ENCODE measurements at regions of chr3 and their contacts with region 1.

Region 1: GRCh38 chr3:193780810-193781472 is 187.9 kb downstream of the OPA1 start:
- DNase-seq: peak; percentile 84
- H3K4me3 Mint-ChIP-seq: no peak overlapping the region
- H3K27ac Mint-ChIP-seq: peak overlapping the region; percentile 97
- H3K4me1 Mint-ChIP-seq: peaks cover 55% of the 10 kb centered on the region
- H3K27me3 Mint-ChIP-seq: no peaks in the 10 kb centered on the region
- CTCF ChIP-seq: peak; percentile 96

Region 2: GRCh38 chr3:193665370-193665989 is 115.5 kb before region 1 on chr3:
- CTCF ChIA-PET with region 1: interaction called, 11 read pairs
- intact Hi-C with region 1: no loop called
- DNase-seq: no peak
- H3K4me3 Mint-ChIP-seq: no peak overlapping the region
- H3K27ac Mint-ChIP-seq: no peak overlapping the region
- H3K4me1 Mint-ChIP-seq: no peaks in the 10 kb centered on the region
- H3K27me3 Mint-ChIP-seq: no peaks in the 10 kb centered on the region
- CTCF ChIP-seq: peak; percentile 74

Region 3: DNA sequence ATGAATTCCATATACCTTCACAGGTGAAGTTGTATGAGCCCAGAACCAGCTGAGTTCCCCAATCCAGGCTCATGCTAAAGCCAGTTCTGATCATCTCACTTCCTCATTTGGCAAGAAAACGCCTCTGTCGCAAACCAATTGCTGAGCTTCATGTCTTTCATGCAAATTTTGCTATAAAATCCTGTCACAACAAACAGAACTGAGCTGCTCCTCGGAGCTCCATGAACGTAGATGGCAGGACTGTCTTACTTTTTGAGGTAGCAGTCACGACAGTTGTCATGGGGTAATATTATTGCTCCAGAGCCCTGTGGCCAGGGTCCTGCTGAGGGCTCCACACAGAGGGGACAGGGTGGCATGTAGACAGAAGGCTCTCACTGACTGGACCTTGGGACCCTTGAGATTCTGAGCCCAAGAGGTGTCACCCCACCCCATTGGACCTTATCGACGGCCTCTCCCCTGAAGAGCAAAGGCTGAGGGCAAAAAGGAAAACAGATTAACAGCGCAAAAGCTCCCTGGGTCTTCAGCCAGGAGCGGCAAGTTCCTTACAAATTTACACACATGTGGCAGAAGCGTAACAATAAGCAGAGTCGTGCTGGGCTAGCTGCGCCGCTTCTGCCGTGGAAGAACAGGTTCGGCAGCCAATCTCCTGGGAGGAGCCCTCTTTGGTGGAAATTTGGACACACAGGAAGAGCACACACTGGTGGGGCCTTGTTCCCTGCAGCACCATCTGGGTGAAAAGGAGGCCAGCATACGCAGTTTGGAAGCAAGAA is 61.3 kb after region 1 on chr3:
- CTCF ChIA-PET with region 1: interaction called, 28 read pairs
- intact Hi-C with region 1: loop called (anchors 2 kb)
- DNase-seq: no peak
- H3K4me3 Mint-ChIP-seq: peak overlapping the region; percentile 59
- H3K27ac Mint-ChIP-seq: peak overlapping the region; percentile 96
- H3K4me1 Mint-ChIP-seq: peaks cover 94% of the 10 kb centered on the region
- H3K27me3 Mint-ChIP-seq: no peaks in the 10 kb centered on the region
- CTCF ChIP-seq: no peak

Region 4: DNA sequence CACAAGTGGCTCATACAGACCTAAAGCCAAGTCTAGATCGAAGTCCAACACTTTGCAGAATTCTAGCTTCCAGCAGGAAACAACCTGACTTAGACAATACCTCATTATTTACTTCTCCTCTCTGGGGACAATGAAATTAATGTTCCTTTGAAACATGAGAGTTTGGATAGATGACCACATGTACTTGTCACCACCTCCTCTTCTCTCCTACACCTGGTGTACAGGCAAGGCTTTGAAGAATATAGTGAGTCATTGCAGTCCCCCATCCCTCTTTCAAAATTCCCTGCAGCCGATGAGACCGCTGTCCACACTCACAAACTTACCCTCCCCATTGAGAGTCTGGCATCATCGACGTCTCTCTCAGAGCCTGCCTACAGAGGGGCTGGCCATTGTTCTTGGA is 166.0 kb after region 1 on chr3:
- CTCF ChIA-PET with region 1: interaction called, 3 read pairs
- intact Hi-C with region 1: loop called (anchors 2 kb)
- DNase-seq: peak; percentile 72
- H3K4me3 Mint-ChIP-seq: no peak overlapping the region
- H3K27ac Mint-ChIP-seq: peak overlapping the region; percentile 52
- H3K4me1 Mint-ChIP-seq: peaks cover 42% of the 10 kb centered on the region
- H3K27me3 Mint-ChIP-seq: no peaks in the 10 kb centered on the region
- CTCF ChIP-seq: no peak

Region 5: GRCh38 chr3:193983846-193984818 is 203.2 kb after region 1 on chr3:
- CTCF ChIA-PET with region 1: no interaction called
- intact Hi-C with region 1: no loop called
- DNase-seq: no peak
- H3K4me3 Mint-ChIP-seq: no peak overlapping the region
- H3K27ac Mint-ChIP-seq: peak overlapping the region; percentile 12
- H3K4me1 Mint-ChIP-seq: peaks cover 22% of the 10 kb centered on the region
- H3K27me3 Mint-ChIP-seq: no peaks in the 10 kb centered on the region
- CTCF ChIP-seq: no peak

Region 6: DNA sequence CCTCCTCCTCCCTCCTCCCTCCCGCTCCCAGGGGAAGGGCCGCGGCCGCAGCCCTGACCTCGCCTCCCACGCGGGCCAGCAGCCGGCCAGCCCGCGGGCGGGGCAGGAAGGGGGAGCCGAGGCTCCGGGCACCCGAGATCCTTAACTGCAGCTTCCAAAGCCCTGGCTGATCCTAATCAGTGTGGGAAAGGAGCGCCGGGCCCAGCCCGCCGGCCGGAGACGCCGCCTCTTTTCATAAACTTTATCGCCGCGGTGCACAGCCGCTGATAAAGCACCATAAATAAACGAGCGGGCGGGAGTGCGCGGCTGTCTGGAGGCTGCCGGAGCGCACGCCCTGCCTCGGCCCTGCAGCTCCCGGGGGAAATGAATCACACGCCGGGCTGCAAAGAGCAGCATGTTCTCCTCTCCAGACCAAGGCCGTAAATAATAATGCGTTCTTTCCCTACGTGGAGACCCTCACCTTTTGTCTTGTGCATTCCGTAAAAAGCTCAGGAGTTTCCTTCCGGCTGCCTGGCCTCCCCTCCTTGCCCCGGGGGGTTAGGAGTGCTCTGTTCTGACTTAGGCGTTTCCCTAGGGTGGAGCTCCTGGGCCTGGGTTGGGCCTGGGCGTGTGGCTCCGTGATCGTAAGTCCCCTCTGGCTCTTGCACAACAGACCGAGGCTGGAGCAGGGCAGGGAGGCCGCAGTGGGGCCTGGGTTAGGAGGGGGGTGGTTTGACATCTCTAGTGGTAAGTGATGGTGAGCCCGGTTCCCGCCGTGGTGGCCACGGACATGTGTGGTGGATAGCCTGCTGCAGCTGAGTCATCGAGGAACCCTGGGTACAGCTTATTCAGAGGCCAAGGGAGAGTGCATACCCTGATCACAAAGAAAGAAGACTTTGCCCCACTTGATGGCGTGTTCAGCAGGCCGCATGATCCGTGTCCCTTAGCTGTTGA is 222.4 kb after region 1 on chr3:
- CTCF ChIA-PET with region 1: interaction called, 18 read pairs
- intact Hi-C with region 1: loop called (anchors 1 kb)
- DNase-seq: peak; percentile 93
- H3K4me3 Mint-ChIP-seq: peak overlapping the region; percentile 68
- H3K27ac Mint-ChIP-seq: peak overlapping the region; percentile 88
- H3K4me1 Mint-ChIP-seq: peaks cover 54% of the 10 kb centered on the region
- H3K27me3 Mint-ChIP-seq: no peaks in the 10 kb centered on the region
- CTCF ChIP-seq: no peak

Region 7: GRCh38 chr3:194141415-194142155 is 360.6 kb after region 1 on chr3:
- CTCF ChIA-PET with region 1: interaction called, 86 read pairs
- intact Hi-C with region 1: loop called (anchors 1 kb)
- DNase-seq: peak; percentile 97
- H3K4me3 Mint-ChIP-seq: peak overlapping the region; percentile 92
- H3K27ac Mint-ChIP-seq: peak overlapping the region; percentile 83
- H3K4me1 Mint-ChIP-seq: peaks cover 35% of the 10 kb centered on the region
- H3K27me3 Mint-ChIP-seq: no peaks in the 10 kb centered on the region
- CTCF ChIP-seq: no peak

Region 8: DNA sequence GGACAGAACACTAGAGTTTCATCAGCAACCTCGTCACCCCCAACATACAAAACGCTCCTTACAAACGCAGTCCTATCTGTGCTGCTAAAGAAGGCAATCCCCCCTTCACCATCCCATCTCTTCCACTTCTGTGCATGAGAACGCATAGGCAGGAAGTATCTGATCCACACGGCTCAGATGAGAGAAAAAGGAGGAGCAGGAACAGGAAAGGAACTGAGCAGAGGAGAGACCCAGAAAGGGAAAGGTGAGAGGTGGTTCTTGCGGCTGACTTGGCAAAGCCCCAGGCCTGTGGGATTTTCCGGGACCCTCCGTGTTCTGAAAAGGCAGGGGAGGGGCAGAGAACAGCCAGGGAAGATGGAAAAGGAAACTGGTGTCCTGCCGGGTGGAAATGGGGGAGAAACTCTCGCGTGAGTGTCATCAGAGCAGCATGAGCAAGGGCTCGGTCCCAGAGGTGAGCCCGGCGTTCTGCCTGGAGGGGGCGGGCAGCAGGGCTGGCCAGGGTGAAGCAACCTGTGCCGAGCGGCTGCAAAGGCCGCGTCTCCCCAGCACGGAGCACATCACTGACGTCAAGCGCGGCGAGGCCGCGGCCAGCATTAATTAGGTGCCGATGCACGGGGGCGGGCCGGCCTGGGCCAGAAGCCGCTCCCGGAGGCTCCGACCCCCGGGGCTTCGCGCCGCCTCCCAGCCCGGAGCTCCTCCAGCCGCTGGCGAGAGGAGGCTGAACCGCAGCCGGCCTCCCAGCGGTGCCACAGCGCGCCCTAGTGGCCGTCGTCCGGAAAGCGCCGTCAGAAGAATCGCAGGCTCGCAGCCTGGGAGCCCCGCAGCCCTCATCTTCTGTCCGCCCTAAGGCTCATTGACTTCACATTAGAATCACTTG is 534.4 kb after region 1 on chr3:
- CTCF ChIA-PET with region 1: interaction called, 59 read pairs
- intact Hi-C with region 1: loop called (anchors 2 kb)
- DNase-seq: peak; percentile 98
- H3K4me3 Mint-ChIP-seq: peak overlapping the region; percentile 69
- H3K27ac Mint-ChIP-seq: peak overlapping the region; percentile 87
- H3K4me1 Mint-ChIP-seq: peaks cover 36% of the 10 kb centered on the region
- H3K27me3 Mint-ChIP-seq: no peaks in the 10 kb centered on the region
- CTCF ChIP-seq: peak; percentile 99